Endothelial cell of umbilical vein (primary cell): ENCODE measurements at regions of chr10 and their contacts with region 1.

Region 1: DNA sequence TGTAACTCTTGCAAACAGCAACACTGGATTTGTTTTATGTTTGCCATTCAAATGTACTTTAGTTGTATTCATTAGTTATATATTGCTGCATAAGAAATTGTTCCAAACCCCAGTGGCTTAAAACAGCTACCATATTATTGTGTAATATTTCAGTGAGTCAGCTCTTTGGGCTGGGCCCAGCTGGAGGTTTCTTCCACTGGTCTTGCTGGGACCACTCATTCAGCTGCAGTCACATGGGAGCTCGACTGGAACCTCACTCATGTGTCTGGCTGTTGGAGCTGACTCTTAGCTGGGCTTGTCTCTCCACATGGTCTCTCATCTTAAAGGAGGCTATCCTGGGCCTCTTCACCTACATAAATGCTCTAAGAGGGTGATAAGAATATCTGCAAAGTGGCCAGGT is 23.2 kb upstream of the PIP4K2A start:
- DNase-seq: peak; percentile 8
- H3K4me3 ChIP-seq: no peak overlapping the region
- H3K27ac ChIP-seq: no peak overlapping the region
- H3K4me1 ChIP-seq: peaks cover 5% of the 10 kb centered on the region
- H3K27me3 ChIP-seq: no peaks in the 10 kb centered on the region
- CTCF ChIP-seq: no peak
- POLR2A ChIP-seq: no peak

Region 2: DNA sequence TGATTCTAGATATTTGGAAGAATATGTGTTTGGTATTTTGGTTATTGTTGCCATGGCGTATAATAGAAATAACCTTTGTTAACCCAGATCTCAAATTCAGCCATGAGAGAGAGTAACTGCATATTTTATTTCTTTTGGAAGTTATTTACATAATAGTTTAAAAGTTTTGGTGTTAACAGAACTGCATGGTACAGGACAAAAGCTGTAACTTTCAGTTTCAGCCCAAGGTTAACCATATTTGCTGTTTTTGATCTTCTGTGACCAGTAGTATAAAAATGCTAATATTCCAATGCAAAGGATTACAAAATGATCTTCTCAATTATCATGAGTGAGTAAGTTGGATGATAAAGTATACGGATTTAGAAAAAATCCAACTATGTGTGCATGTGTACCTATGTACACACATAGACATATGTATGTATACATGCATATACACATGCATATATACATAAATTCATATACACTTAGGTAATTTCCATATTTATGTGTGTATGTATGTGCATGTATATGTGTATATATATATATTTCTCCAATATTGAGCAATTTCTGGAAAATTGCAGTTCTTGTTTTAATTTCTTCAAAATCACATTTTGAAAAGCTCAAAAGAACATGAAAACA is 14.8 kb after region 1 on chr10:
- CTCF ChIA-PET with region 1: interaction called, 12 read pairs
- POLR2A ChIA-PET with region 1: no interaction called
- dilution Hi-C with region 1: no loop called
- intact Hi-C with region 1: no loop called
- DNase-seq: no peak
- H3K4me3 ChIP-seq: no peak overlapping the region
- H3K27ac ChIP-seq: no peak overlapping the region
- H3K4me1 ChIP-seq: peaks cover 10% of the 10 kb centered on the region
- H3K27me3 ChIP-seq: no peaks in the 10 kb centered on the region
- CTCF ChIP-seq: no peak
- POLR2A ChIP-seq: no peak

Region 3: DNA sequence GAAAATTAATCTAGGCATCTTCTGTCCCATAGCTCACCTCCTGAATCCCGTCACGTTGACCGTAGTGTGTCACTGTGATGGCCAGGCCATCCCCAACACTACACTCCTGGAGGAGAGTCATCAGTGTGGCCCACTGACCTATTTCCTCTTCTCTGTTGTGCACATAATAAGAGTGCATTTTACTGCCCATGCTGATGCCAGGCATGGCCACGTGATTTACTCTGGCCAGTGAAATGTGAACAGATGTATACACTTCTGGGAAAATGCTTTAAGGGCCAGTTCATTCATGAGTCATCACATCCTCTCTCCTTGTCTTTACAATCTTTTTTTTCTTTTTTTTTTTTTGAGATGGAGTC is 78.7 kb after region 1 on chr10:
- CTCF ChIA-PET with region 1: no interaction called
- POLR2A ChIA-PET with region 1: no interaction called
- dilution Hi-C with region 1: no loop called
- intact Hi-C with region 1: loop called (anchors 5 kb)
- DNase-seq: peak; percentile 93
- H3K4me3 ChIP-seq: no peak overlapping the region
- H3K27ac ChIP-seq: peak overlapping the region; percentile 86
- H3K4me1 ChIP-seq: peaks cover 15% of the 10 kb centered on the region
- H3K27me3 ChIP-seq: no peaks in the 10 kb centered on the region
- CTCF ChIP-seq: no peak
- POLR2A ChIP-seq: no peak

Region 4: GRCh38 chr10:22927661-22928403 is 190.2 kb after region 1 on chr10 and contains the start of gene ARMC3:
- CTCF ChIA-PET with region 1: no interaction called
- POLR2A ChIA-PET with region 1: no interaction called
- dilution Hi-C with region 1: no loop called
- intact Hi-C with region 1: no loop called
- DNase-seq: peak; percentile 57
- H3K4me3 ChIP-seq: peak within 1 kb of the TSS in 2 of 3 experiments; percentile 16 to 22
- H3K27ac ChIP-seq: no peak within 1 kb of the TSS
- H3K4me1 ChIP-seq: peaks cover 7% of the 10 kb centered on the region
- H3K27me3 ChIP-seq: peaks cover 5 to 8% of the 10 kb centered on the region in 2 experiments
- CTCF ChIP-seq: no peak
- POLR2A ChIP-seq: no peak
- total RNA-seq, gene ARMC3: not detected in 2 replicates